Activated naive CD4-positive, alpha-beta T cell treated with anti-CD3 and anti-CD28 coated beads for 36 hours (primary cell): ENCODE measurements at regions of chr2 and their contacts with region 1.

Region 1: DNA sequence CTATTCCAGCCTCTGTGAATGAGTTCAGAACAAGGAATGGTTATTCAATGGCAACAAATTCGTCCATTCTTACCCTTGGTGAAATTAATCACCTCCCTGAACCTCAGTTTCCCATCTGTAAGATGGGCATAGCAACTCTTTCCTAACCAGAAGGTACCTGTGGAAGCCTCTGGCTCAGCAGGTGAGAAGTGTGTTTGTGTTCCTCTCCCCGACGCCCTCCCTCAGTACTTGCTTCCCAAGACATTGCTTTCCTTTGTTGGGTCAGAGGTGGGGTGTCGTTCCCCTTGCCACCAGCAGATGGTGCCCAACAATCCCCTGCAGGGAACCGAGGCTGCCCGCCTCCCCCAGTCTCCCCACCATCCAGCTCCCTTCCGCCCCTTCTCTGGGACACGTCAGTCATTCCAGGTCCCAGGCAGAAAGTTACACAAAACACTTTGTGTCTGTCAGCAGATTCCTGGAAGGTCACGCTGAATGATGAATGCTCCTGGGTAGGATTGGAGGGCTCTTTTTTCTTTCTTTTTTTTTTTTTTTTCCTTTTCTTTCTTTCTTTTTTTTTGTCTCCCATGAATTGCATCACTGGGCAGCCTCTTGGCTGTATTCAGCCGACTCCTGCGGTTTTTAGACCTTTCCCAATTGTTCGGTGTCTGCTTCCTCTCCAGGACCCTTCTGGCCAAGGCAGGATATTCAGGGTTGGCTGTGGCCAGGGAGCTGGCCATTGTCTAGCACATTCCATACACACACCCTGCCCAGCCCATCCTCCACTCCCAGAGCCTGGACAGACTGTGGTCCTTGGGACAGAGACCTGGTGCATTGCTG is 117.3 kb downstream of the LPIN1 start:
- DNase-seq: peak; percentile 74
- H3K4me3 Mint-ChIP-seq: no peak overlapping the region
- H3K27ac Mint-ChIP-seq: no peak overlapping the region
- H3K4me1 Mint-ChIP-seq: peaks cover 22% of the 10 kb centered on the region
- H3K27me3 Mint-ChIP-seq: peaks cover 2% of the 10 kb centered on the region

Region 2: DNA sequence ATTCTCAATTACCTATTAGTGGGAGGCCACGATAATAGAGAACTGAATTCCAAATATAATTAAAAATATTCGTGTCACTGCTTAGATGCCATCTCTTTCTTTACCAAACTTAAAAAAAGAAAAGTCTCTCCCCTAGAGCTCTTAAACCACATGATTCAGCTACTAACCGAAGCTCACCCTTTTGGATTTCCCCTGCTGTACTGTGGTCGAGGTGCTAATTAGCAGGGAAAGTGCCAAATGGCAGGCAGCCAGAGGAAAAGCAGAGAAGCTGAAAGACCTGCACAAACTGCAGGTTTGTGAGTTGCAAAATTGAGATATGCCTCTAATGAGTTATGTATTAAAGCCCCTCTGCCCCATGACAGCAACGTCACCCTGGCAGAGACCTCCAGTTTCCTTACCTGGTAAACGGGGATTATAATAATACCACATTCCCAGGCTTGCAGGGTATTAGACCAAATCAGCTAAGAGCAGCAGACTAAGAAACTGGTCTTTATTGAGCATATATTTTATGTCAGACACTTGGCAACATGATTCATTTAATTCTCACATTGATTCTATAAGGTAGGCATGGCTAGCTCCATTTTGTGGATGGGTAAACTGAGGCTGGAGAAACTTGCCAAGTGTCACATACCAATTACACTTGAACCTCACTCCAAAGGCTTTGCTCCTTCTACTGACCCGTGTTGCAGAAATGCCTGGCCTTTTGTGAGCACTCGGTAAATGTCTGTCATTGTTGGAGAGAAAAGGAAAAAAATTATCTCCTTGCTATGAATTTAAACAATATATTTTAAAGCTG is 142.4 kb after region 1 on chr2:
- CTCF ChIA-PET with region 1: interaction called, 4 read pairs
- intact Hi-C with region 1: loop called (anchors 2 kb)
- DNase-seq: peak; percentile 92
- H3K4me3 Mint-ChIP-seq: no peak overlapping the region
- H3K27ac Mint-ChIP-seq: no peak overlapping the region
- H3K4me1 Mint-ChIP-seq: peaks cover 22% of the 10 kb centered on the region
- H3K27me3 Mint-ChIP-seq: peaks cover 52% of the 10 kb centered on the region

Region 3: DNA sequence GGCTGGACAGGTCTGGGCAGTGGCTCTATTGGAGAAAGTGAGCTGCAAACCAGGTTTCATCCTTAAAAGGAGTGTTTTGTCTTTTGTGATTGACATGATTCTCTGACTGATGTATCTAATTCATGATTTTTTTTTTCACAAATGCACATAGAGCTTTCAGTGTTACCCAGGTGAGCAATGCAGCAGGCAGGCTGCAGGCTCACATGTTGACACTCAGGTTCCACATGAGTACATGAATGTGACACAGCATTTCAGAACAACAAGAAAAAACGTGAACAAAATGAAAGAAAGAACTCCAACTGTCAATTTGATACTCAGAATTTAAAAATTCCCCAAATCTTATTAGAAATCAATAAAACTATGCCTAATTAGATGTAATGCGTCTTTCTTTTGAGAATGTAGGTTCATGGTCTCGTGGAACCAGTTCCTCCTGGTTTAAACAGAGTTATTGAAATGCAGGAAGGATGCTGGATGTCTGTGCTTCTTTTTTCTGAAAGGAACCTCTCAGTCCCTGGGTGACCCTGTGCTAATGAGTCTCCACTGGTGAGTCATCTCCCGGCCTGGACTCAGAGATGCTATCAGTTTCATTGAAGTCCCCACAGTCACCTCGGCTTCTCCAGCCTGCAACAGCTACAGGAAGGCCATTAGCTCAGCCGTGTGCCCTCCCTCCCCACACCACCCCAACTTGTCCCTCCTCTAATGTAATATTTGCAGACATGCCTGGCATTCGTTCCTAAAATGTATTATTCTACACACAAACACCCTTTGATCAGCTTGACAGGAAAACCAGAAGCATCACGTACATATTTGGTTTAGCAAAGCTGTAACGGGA is 313.1 kb after region 1 on chr2:
- CTCF ChIA-PET with region 1: no interaction called
- intact Hi-C with region 1: loop called (anchors 5 kb)
- DNase-seq: peak; percentile 49
- H3K4me3 Mint-ChIP-seq: peak overlapping the region; percentile 11
- H3K27ac Mint-ChIP-seq: no peak overlapping the region
- H3K4me1 Mint-ChIP-seq: peaks cover 40% of the 10 kb centered on the region
- H3K27me3 Mint-ChIP-seq: no peaks in the 10 kb centered on the region

Region 4: GRCh38 chr2:12326449-12327190 is 462.9 kb after region 1 on chr2:
- CTCF ChIA-PET with region 1: no interaction called
- intact Hi-C with region 1: loop called (anchors 5 kb)
- DNase-seq: peak; percentile 35
- H3K4me3 Mint-ChIP-seq: no peak overlapping the region
- H3K27ac Mint-ChIP-seq: no peak overlapping the region
- H3K4me1 Mint-ChIP-seq: peaks cover 2% of the 10 kb centered on the region
- H3K27me3 Mint-ChIP-seq: no peaks in the 10 kb centered on the region

Region 5: GRCh38 chr2:12404497-12404896 is 540.8 kb after region 1 on chr2:
- CTCF ChIA-PET with region 1: no interaction called
- intact Hi-C with region 1: no loop called
- DNase-seq: no peak
- H3K4me3 Mint-ChIP-seq: no peak overlapping the region
- H3K27ac Mint-ChIP-seq: no peak overlapping the region
- H3K4me1 Mint-ChIP-seq: no peaks in the 10 kb centered on the region
- H3K27me3 Mint-ChIP-seq: peaks cover 3% of the 10 kb centered on the region